ENCODE measurements at regions of chr4 and their contacts with region 1.

Region 1: GRCh38 chr4:77232653-77233052 is 75.6 kb downstream of the CCNG2 start:
- DNase-seq: no peak
- H3K4me3 ChIP-seq: no peak overlapping the region
- H3K27ac ChIP-seq: no peak overlapping the region
- H3K4me1 ChIP-seq: no peaks in the 10 kb centered on the region
- H3K27me3 ChIP-seq: no peaks in the 10 kb centered on the region
- CTCF ChIP-seq: no peak

Region 2: DNA sequence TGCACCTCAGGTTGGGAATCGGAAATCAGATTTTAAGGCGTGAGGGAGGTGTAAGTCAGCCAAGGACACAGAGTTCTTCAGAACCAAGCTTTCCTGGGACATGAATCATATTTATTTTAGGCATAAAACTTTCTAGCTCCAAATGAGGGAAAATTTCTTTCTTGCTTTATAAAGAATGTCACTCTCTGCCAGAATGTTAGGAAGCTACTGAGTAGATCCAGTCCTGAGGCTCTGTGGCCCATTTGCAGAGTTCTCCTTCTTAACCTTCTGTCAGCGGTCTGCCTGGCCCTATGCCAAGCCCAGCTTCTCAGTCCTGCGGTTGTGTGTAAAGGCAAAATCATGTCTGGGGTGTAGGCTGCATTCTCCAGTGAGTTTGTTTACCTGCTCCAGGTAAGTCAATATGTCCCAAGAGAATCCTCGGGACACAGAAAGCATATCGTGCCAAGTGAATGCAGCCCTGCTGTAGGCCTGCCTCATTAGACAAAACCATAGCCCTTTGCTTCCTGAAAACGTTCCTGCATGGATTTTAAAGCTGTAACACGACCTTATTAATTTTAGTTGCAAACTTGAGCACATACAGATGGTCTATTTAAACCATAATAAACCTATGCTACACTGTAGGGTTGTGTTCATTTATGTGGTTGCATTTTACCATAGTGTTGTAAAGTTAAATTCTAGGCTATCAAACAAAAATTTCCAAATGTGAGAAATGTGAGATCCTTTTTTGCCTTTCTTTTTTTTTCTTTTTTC is 127.7 kb before region 1 on chr4:
- intact Hi-C with region 1: no loop called
- DNase-seq: peak in 4 of 5 donors; percentile 32 to 93 (median 65)
- H3K4me3 ChIP-seq: peak overlapping the region in 2 of 3 donors; percentile 31 to 36
- H3K27ac ChIP-seq: peak overlapping the region in 1 of 2 donors; percentile 53
- H3K4me1 ChIP-seq: peaks cover 0 to 9% (median 2%) of the 10 kb centered on the region in 3 donors
- H3K27me3 ChIP-seq: no peaks in the 10 kb centered on the region
- CTCF ChIP-seq: no peak

Region 3: DNA sequence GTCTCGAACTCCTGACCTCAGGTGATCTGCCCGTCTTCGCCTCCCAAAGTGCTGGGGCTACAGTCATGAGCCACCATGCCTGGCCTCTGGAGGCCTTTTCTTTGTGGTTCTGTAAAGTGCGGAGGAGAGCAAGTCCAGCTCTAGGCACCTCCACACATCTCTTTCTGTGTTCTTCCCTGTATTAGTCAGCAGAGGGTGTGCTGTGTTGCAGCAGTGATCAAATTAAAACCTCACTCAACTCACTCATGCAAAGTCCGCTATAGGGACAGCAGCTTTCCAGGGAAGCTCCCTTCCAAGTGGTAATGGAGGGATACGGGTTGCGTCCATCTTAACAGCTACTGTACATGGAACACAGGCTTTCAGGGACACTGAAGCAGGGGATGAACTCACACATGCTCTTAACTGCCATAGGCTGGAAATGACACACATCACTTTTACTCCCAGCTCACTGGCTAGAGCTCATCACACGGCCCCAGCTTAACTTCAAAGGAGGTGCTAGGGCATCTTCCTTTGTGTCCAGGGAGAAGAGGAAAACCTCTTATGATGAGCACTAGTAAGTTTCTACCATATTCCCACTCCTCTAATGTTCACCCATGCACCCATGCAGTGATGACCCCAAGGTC is 111.7 kb before region 1 on chr4:
- intact Hi-C with region 1: no loop called
- DNase-seq: no peak
- H3K4me3 ChIP-seq: no peak overlapping the region
- H3K27ac ChIP-seq: no peak overlapping the region
- H3K4me1 ChIP-seq: no peaks in the 10 kb centered on the region
- H3K27me3 ChIP-seq: no peaks in the 10 kb centered on the region
- CTCF ChIP-seq: peak; percentile 24

Region 4: DNA sequence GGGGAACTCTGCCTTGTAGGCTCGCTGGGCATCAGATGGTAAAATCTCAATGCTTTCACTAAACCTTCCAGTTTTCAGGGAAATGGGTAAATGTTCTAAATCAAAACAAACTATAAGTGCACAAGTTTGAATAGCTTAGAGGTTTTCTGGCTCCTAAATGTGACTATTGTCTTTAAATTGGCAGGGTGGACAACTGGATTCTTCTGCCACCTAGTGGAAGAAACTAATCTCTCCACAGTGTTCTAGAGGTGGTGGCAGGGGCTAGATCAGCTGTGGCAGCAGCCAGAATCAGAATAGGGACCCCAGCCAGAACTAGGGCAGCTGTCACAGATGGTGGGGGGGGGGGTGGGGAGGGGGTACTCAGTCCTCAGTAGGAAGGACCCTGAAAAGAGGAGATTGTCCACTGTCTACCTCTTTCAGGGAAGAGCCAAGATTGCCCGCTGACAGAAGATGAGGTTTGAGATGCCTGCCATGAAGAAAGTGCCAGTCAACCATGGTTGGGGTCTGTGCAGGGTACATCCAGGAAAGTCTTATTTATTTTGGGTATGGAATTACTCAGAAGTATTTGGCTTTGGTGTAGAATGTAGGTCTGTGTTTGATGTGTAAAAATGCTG is 125.8 kb after region 1 on chr4:
- intact Hi-C with region 1: loop called (anchors 10 kb)
- DNase-seq: peak in 3 of 5 donors; percentile 14 to 74 (median 60)
- H3K4me3 ChIP-seq: no peak overlapping the region
- H3K27ac ChIP-seq: no peak overlapping the region
- H3K4me1 ChIP-seq: no peaks in the 10 kb centered on the region
- H3K27me3 ChIP-seq: no peaks in the 10 kb centered on the region
- CTCF ChIP-seq: peak; percentile 46

Measured in kidney (tissue), 22 donors.